ENCODE measurements at regions of chr3 and their contacts with region 1.

Region 1: DNA sequence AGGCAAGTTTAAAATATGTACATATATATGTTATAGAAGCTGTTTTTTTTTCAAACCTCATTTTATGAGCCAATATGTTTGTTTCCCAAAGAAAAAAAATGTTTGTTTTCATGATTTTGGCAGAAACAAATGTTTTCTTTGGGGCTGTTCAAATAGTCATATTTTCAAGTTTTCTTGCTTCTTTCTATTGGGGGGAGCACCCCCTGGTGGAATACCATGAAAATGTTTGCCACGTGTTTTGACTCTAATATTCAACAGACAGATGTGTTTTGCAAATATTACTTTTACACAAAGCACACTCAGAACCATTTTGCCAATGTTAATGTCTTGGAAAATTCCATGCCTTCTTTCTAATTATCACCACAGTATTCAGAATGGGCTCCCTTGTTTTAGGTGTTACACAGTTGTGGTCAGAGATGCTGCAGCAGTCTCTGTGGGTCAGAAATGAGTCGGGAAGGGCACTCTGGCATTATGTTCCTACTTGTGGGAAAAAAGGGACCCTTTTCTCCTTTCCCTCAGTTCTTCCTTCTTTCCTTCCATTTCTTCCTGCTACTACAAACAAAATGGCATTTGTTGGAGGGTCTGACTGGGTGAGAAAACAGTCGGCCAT is 817.0 kb downstream of the TUSC7 start:
- DNase-seq: peak; percentile 55
- ATAC-seq: peak; percentile 48; the same call in 1 of the 2 replicates
- H3K4me3 ChIP-seq: no peak overlapping the region
- H3K27ac ChIP-seq: no peak overlapping the region
- H3K4me1 ChIP-seq: peaks cover 8% of the 10 kb centered on the region
- H3K27me3 ChIP-seq: no peaks in the 10 kb centered on the region
- CTCF ChIP-seq: peak; percentile 70
- POLR2A ChIP-seq: no peak
- RAD21 ChIP-seq: peak; percentile 73

Region 2: GRCh38 chr3:116863822-116864589 is 662.6 kb before region 1 on chr3:
- CTCF ChIA-PET with region 1: no interaction called
- POLR2A ChIA-PET with region 1: no interaction called
- dilution Hi-C with region 1: no loop called
- in situ Hi-C with region 1: no loop called
- intact Hi-C with region 1: loop called (anchors 5 kb)
- DNase-seq: peak; percentile 64
- ATAC-seq: peak; percentile 66
- H3K4me3 ChIP-seq: peak overlapping the region; percentile 82
- H3K27ac ChIP-seq: no peak overlapping the region
- H3K4me1 ChIP-seq: no peaks in the 10 kb centered on the region
- H3K27me3 ChIP-seq: no peaks in the 10 kb centered on the region
- CTCF ChIP-seq: peak; percentile 66
- POLR2A ChIP-seq: no peak
- RAD21 ChIP-seq: peak; percentile 74

Region 3: DNA sequence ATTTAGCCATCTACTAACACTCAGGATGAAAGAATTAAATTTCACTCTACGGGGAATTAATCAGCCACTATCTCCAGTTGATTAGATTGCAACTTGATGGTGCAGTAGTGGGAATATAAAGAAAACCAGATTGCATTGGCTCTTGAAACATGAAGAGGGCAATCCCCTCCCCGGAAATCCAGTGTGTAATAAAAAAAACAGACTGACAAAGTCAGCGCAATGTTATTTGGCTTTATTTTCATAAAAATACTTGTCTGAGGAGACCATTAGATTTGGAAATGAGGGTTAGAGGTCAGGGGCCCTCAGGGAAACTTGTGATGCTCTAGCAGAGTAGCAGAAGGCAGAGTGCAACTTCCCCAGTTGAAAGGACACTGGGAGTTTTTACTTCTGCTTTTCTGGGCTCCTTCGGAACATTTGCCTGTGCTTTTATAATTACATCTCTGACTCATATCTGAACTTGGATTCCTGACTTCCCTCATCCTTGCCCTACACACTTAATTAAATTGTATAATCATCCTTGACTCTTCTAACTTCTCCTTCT is 490.2 kb before region 1 on chr3:
- CTCF ChIA-PET with region 1: no interaction called
- POLR2A ChIA-PET with region 1: interaction called, 4 read pairs
- dilution Hi-C with region 1: no loop called
- in situ Hi-C with region 1: loop called (anchors 25 kb)
- intact Hi-C with region 1: no loop called
- DNase-seq: peak; percentile 81
- ATAC-seq: peak; percentile 86
- H3K4me3 ChIP-seq: no peak overlapping the region
- H3K27ac ChIP-seq: peak overlapping the region; percentile 4; the same call in 1 of the 2 replicates
- H3K4me1 ChIP-seq: peaks cover 7% of the 10 kb centered on the region
- H3K27me3 ChIP-seq: no peaks in the 10 kb centered on the region
- CTCF ChIP-seq: no peak
- POLR2A ChIP-seq: no peak
- RAD21 ChIP-seq: no peak

Region 4: DNA sequence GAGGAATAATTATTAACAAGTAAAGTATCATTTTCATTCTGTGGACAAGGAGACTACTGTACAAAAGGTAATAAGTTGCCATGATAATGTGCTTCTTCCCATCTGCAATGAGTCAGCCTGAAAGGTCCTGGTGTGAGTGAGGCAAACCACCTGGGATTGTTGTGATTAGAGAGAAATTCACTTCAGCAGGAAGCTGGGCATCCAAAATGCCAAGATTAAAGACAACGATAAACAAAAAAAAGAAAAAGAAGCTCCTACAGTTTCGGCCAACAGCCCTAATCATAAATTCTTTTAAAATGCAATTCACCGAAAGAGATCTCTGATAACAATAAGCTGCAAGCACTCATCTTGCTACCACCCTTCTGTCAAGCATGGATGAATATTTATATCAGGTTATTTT is 309.2 kb before region 1 on chr3:
- CTCF ChIA-PET with region 1: no interaction called
- POLR2A ChIA-PET with region 1: no interaction called
- dilution Hi-C with region 1: no loop called
- in situ Hi-C with region 1: no loop called
- intact Hi-C with region 1: loop called (anchors 10 kb)
- DNase-seq: peak; percentile 74
- ATAC-seq: peak; percentile 44
- H3K4me3 ChIP-seq: no peak overlapping the region
- H3K27ac ChIP-seq: no peak overlapping the region
- H3K4me1 ChIP-seq: peaks cover 9% of the 10 kb centered on the region; the same call in 1 of the 2 replicates
- H3K27me3 ChIP-seq: no peaks in the 10 kb centered on the region
- CTCF ChIP-seq: no peak
- POLR2A ChIP-seq: no peak
- RAD21 ChIP-seq: no peak

Region 5: GRCh38 chr3:118075873-118076272 is 549.3 kb after region 1 on chr3:
- CTCF ChIA-PET with region 1: no interaction called
- POLR2A ChIA-PET with region 1: no interaction called
- dilution Hi-C with region 1: no loop called
- in situ Hi-C with region 1: no loop called
- intact Hi-C with region 1: no loop called
- DNase-seq: peak; percentile 58
- ATAC-seq: peak; percentile 72
- H3K4me3 ChIP-seq: no peak overlapping the region
- H3K27ac ChIP-seq: no peak overlapping the region
- H3K4me1 ChIP-seq: no peaks in the 10 kb centered on the region
- H3K27me3 ChIP-seq: no peaks in the 10 kb centered on the region
- CTCF ChIP-seq: no peak
- POLR2A ChIP-seq: no peak
- RAD21 ChIP-seq: no peak

Region 6: DNA sequence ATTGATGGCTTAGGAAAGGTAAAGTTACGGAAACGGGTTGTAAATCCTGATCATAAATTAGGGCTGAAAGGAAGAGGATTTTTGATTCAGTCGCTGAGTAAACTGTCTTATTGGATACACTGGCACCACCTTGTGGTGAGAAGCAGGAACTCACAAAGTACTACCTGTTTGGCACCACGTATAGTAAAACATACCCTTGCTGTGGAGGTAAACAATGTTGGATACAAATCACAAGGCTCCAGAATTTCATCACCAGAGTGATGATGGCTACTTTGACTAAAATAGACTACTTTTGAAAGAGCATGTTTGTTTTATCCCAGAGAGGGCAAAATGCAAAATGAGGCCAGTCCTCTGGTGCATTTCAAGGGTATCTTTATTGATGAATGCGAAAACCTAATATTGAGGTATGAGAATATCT is 1291.2 kb after region 1 on chr3:
- CTCF ChIA-PET with region 1: no interaction called
- POLR2A ChIA-PET with region 1: no interaction called
- dilution Hi-C with region 1: no loop called
- in situ Hi-C with region 1: no loop called
- intact Hi-C with region 1: loop called (anchors 10 kb)
- DNase-seq: peak; percentile 57
- ATAC-seq: peak; percentile 83
- H3K4me3 ChIP-seq: no peak overlapping the region
- H3K27ac ChIP-seq: no peak overlapping the region
- H3K4me1 ChIP-seq: no peaks in the 10 kb centered on the region
- H3K27me3 ChIP-seq: peaks cover 1% of the 10 kb centered on the region; the same call in 1 of the 2 replicates
- CTCF ChIP-seq: peak; percentile 70
- POLR2A ChIP-seq: no peak
- RAD21 ChIP-seq: peak; percentile 62